ENCODE measurements at regions of chr2 and their contacts with region 1.

Region 1: DNA sequence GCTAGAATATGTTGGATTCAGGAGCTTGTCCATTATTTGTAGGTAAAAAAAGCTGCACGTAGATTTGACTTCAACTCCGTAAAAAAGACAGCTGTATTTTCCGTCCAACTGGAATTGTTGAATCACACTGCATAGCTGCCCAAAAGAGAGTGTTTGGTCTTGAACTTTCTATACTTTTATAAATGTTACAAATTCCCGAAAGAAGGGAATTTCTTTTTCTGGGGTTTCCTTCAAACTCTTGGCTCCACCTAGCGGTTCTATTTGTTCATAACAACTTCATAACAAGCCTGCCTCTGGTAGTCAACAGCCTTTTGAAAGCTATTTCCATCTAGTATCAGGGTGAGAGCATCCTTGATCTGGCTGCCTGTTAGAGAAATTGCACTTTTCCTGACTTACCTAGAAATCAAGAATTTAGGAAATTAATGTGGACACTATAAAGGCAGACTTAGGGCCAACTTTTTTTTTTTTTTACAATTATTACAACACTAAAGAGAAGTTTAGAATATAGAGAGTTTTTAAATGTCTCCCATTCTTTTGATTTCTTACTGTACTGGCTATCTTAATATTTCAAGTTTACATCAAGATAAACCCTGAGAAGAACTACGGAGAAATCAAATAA is 48.1 kb downstream of the TMEM185B start:
- DNase-seq: no peak
- ATAC-seq: no peak
- H3K4me3 Mint-ChIP-seq: no peak overlapping the region
- H3K27ac Mint-ChIP-seq: peak overlapping the region; percentile 37
- H3K4me1 Mint-ChIP-seq: peaks cover 47% of the 10 kb centered on the region
- H3K27me3 Mint-ChIP-seq: no peaks in the 10 kb centered on the region

Region 2: DNA sequence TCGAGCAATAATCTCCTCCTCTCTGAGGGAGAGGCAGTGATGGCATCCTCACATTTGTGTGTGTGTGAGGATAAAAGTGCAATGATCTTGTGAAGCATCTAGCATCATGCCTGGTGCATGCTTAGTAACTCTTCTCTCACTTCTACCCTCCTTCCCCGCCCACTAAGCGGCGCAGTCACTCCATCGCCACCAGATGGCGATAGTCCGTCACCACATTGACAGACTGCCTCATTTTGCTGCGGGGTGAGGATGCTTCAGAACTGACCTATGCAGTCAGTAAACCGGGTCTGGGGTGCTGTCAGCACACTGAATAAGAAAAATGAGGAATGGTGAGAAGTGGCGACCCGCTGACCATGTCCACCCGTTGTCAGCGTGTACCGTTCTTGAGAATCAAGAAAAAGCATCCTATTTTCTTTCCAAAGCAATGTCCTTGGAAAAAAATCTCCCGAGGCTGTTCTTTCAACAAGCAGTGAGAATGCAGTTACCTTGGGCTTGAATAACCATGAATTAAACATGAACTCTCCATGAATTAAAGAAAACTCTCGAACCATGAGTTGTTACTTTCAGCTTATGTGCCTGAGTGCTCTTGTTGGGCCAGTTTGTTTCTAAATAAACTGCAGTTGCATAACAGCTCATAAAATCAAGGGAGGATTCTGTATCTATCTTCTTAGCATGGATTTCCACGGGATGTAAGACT is 533.4 kb before region 1 on chr2:
- CTCF ChIA-PET with region 1: interaction called, 13 read pairs
- DNase-seq: peak; percentile 81
- ATAC-seq: peak; percentile 91
- H3K4me3 Mint-ChIP-seq: no peak overlapping the region
- H3K27ac Mint-ChIP-seq: no peak overlapping the region
- H3K4me1 Mint-ChIP-seq: peaks cover 1% of the 10 kb centered on the region
- H3K27me3 Mint-ChIP-seq: peaks cover 22% of the 10 kb centered on the region

Region 3: GRCh38 chr2:119702918-119703401 is 472.1 kb before region 1 on chr2:
- CTCF ChIA-PET with region 1: interaction called, 53 read pairs
- DNase-seq: peak; percentile 76
- ATAC-seq: peak; percentile 93
- H3K4me3 Mint-ChIP-seq: no peak overlapping the region
- H3K27ac Mint-ChIP-seq: no peak overlapping the region
- H3K4me1 Mint-ChIP-seq: peaks cover 11% of the 10 kb centered on the region
- H3K27me3 Mint-ChIP-seq: peaks cover 10% of the 10 kb centered on the region

Region 4: GRCh38 chr2:119826370-119826961 is 348.6 kb before region 1 on chr2:
- CTCF ChIA-PET with region 1: interaction called, 17 read pairs
- DNase-seq: peak; percentile 59
- ATAC-seq: peak; percentile 56
- H3K4me3 Mint-ChIP-seq: no peak overlapping the region
- H3K27ac Mint-ChIP-seq: no peak overlapping the region
- H3K4me1 Mint-ChIP-seq: peaks cover 35% of the 10 kb centered on the region
- H3K27me3 Mint-ChIP-seq: no peaks in the 10 kb centered on the region

Region 5: GRCh38 chr2:120109186-120110061 is 65.6 kb before region 1 on chr2:
- CTCF ChIA-PET with region 1: interaction called, 82 read pairs
- DNase-seq: peak; percentile 42
- ATAC-seq: peak; percentile 74
- H3K4me3 Mint-ChIP-seq: peak overlapping the region; percentile 15
- H3K27ac Mint-ChIP-seq: peak overlapping the region; percentile 40
- H3K4me1 Mint-ChIP-seq: peaks cover 17% of the 10 kb centered on the region
- H3K27me3 Mint-ChIP-seq: peaks cover 11% of the 10 kb centered on the region

Measured in activated CD8-positive, alpha-beta memory T cell treated with anti-CD3 and anti-CD28 coated beads, Interleukin-2, amount 10 ng/mL, durations not matched to agents 7 days and 5 days (primary cell).